A549 (cell line): ENCODE measurements at regions of chr3 and their contacts with region 1.

Region 1: GRCh38 chr3:11060500-11061251 is 68.1 kb downstream of the SLC6A1 start:
- DNase-seq: peak; percentile 71 to 75
- ATAC-seq: peak; percentile 87 to 93
- H3K4me3 ChIP-seq: peak overlapping the region; percentile 42
- H3K27ac ChIP-seq: peak overlapping the region; percentile 45 to 78
- H3K4me1 ChIP-seq: peaks cover 8% of the 10 kb centered on the region; the same call in 1 of the 3 replicates
- CTCF ChIP-seq: peak; percentile 94
- EP300 ChIP-seq: no peak
- POLR2A ChIP-seq: no peak
- RAD21 ChIP-seq: peak; percentile 79 to 90

Region 2: GRCh38 chr3:10935846-10936631 is 124.6 kb before region 1 on chr3:
- CTCF ChIA-PET with region 1: interaction called, 164 read pairs
- POLR2A ChIA-PET with region 1: no interaction called
- DNase-seq: no peak
- ATAC-seq: no peak
- H3K4me3 ChIP-seq: no peak overlapping the region
- H3K27ac ChIP-seq: no peak overlapping the region
- H3K4me1 ChIP-seq: peaks cover 7% of the 10 kb centered on the region; the same call in 2 of the 3 replicates
- CTCF ChIP-seq: no peak
- EP300 ChIP-seq: no peak
- POLR2A ChIP-seq: no peak
- RAD21 ChIP-seq: no peak

Region 3: DNA sequence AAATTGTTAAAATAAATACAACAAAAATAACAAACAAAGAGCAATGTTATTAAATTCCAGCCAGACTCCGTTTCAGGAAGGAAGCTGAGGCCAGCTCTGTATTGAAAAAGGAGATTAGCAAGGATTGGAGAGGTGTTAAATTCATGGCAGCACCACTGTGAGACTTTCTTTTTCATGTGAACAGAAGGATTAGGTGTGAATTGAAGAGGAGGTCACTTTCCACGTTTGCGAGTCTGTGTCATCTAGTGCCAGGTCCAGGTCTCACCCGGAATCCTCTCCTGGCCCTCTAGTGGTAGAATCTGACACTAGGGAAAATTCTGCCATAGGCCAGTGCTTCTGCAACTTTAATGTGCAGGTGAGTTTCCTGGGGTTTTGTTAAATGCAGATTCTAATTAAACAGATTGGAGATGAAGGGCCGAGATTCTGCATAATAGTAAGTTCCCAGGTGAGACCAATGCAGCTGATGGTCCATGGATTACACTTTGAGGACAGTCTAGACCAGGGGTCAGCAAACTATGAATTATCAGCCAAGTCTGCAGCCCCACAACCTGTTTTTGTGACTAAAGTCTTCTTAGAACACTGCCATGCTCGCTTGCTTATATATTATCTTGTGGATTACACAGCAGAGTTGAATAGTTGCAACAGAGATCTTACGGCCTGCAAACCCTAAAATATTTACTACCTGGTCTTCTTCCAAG is 77.3 kb before region 1 on chr3:
- CTCF ChIA-PET with region 1: interaction called, 31 read pairs
- POLR2A ChIA-PET with region 1: no interaction called
- DNase-seq: peak; percentile 37 to 87
- ATAC-seq: peak; percentile 83 to 94
- H3K4me3 ChIP-seq: no peak overlapping the region
- H3K27ac ChIP-seq: no peak overlapping the region
- H3K4me1 ChIP-seq: peaks cover 4% of the 10 kb centered on the region; the same call in 2 of the 3 replicates
- CTCF ChIP-seq: peak; percentile 74
- EP300 ChIP-seq: no peak
- POLR2A ChIP-seq: no peak
- RAD21 ChIP-seq: peak; percentile 35 to 50; a peak in 4 of 5 replicates

Region 4: DNA sequence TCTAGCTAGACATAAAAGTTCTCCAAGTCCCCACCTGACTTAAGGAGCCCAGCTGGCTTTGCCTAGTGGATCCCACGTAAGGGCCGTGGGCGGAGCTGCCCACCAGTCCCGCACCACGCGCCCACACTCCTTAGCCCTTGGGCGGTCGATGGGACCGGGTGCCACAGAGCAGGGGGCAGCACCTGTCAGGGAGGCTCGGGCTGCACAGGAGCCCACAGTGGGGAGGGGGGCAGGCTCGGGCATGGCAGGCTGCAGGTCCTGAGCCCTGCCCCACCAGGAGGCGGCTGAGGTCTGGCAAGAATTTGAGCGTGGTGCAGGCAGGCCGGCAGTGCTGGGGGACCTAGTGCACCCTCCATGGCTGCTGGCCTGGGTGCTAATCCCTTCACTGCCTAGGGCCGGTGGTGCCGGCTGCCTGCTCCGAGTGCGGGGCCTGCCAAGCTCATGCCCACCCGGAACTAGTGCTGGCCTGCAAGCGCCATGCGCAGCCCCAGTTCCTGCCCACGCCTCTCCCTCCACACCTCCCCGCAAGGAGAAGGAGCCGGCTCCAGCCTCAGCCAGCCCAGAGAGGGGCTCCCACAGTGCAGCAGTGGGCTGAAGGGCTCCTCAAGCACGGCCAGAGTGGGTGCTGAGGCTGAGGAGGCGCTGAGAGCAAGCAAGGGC is 10.6 kb after region 1 on chr3:
- CTCF ChIA-PET with region 1: interaction called, 43 read pairs
- POLR2A ChIA-PET with region 1: no interaction called
- DNase-seq: no peak
- ATAC-seq: no peak
- H3K4me3 ChIP-seq: no peak overlapping the region
- H3K27ac ChIP-seq: no peak overlapping the region
- H3K4me1 ChIP-seq: no peaks in the 10 kb centered on the region
- CTCF ChIP-seq: no peak
- EP300 ChIP-seq: no peak
- POLR2A ChIP-seq: no peak
- RAD21 ChIP-seq: no peak

Region 5: GRCh38 chr3:11096266-11097135 is 35.8 kb after region 1 on chr3:
- CTCF ChIA-PET with region 1: interaction called, 56 read pairs
- POLR2A ChIA-PET with region 1: no interaction called
- DNase-seq: peak; percentile 73 to 88
- ATAC-seq: peak; percentile 93 to 95
- H3K4me3 ChIP-seq: peak overlapping the region; percentile 16
- H3K27ac ChIP-seq: peak overlapping the region; percentile 78 to 92
- H3K4me1 ChIP-seq: peaks cover 16% of the 10 kb centered on the region
- CTCF ChIP-seq: no peak; the same call in 2 of the 3 replicates
- EP300 ChIP-seq: peak in 1 of 2 experiments; percentile 44; a peak in 1 of 5 replicates
- POLR2A ChIP-seq: no peak
- RAD21 ChIP-seq: peak in 1 of 2 experiments; percentile 38; a peak in 3 of 5 replicates

Region 6: GRCh38 chr3:11155341-11156025 is 94.8 kb after region 1 on chr3:
- CTCF ChIA-PET with region 1: interaction called, 142 read pairs
- POLR2A ChIA-PET with region 1: interaction called, 4 read pairs
- DNase-seq: peak; percentile 78 to 87
- ATAC-seq: peak; percentile 91 to 98
- H3K4me3 ChIP-seq: peak overlapping the region; percentile 56
- H3K27ac ChIP-seq: peak overlapping the region; percentile 66 to 83; a peak in 5 of 6 replicates
- H3K4me1 ChIP-seq: peaks cover 7% of the 10 kb centered on the region; the same call in 2 of the 3 replicates
- CTCF ChIP-seq: peak; percentile 83
- EP300 ChIP-seq: no peak
- POLR2A ChIP-seq: no peak
- RAD21 ChIP-seq: peak; percentile 78 to 79

Region 7: DNA sequence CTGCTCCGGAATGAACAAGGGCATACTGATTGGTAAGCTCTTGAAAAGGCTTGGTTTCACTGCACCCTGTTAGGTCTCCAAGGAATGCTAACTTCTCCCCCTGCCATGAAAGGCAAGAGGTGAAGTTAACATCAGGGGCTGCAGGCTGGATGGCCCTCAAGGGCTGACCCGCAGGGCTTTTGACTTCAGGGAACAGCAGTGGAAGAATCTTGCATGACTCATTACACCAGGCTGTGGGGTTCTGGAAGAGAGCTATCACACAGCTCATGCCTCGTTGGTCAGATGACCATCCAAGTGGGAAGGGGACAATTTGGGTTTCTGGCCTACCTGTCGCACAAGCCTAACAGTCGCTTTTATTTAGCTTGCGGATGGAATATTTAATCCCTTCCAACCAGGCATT is 187.9 kb after region 1 on chr3:
- CTCF ChIA-PET with region 1: no interaction called
- POLR2A ChIA-PET with region 1: no interaction called
- DNase-seq: no peak
- ATAC-seq: no peak
- H3K4me3 ChIP-seq: no peak overlapping the region
- H3K27ac ChIP-seq: no peak overlapping the region
- H3K4me1 ChIP-seq: peaks cover 11% of the 10 kb centered on the region
- CTCF ChIP-seq: no peak
- EP300 ChIP-seq: no peak
- POLR2A ChIP-seq: no peak
- RAD21 ChIP-seq: no peak

Region 8: DNA sequence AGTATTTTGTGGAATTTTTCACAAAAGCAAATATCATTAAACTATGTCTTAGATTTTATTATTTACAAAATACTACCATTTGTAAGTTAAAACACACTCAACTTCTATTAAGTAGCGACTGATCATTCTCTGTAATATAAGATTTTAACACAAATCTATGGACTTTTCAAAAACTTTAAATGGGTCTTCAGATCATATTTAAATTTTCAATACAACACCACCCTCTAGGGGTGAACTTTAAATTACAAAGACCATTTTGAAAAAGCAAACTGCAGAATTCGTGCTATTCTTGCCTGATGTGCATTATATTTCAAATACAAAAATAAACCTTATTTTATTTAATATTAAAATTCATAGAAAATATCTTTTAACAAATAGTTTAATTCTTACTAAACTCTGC is 591.2 kb after region 1 on chr3:
- CTCF ChIA-PET with region 1: interaction called, 10 read pairs
- POLR2A ChIA-PET with region 1: no interaction called
- DNase-seq: peak in 1 of 2 experiments; percentile 44
- ATAC-seq: no peak
- H3K4me3 ChIP-seq: no peak overlapping the region
- H3K27ac ChIP-seq: no peak overlapping the region
- H3K4me1 ChIP-seq: no peaks in the 10 kb centered on the region
- CTCF ChIP-seq: peak; percentile 73
- EP300 ChIP-seq: no peak
- POLR2A ChIP-seq: no peak
- RAD21 ChIP-seq: peak; percentile 75 to 79